Natural killer cell (primary cell): ENCODE measurements at regions of chr5 and their contacts with region 1.

Region 1: GRCh38 chr5:172133359-172134029 is 54.5 kb downstream of the STK10 start:
- DNase-seq: peak; percentile 53 to 61
- ATAC-seq: peak; percentile 79 to 91 (median 86)
- H3K4me3 ChIP-seq: no peak overlapping the region
- H3K4me3 Mint-ChIP-seq: peak overlapping the region; percentile 79
- H3K27ac ChIP-seq: peak overlapping the region; percentile 58
- H3K27ac Mint-ChIP-seq: peak overlapping the region; percentile 87 to 90
- H3K4me1 ChIP-seq: peaks cover 64% of the 10 kb centered on the region
- H3K4me1 Mint-ChIP-seq: peaks cover 80 to 81% of the 10 kb centered on the region in 2 donors
- H3K27me3 ChIP-seq: no peaks in the 10 kb centered on the region
- H3K27me3 Mint-ChIP-seq: no peaks in the 10 kb centered on the region
- CTCF ChIP-seq: no peak

Region 2: DNA sequence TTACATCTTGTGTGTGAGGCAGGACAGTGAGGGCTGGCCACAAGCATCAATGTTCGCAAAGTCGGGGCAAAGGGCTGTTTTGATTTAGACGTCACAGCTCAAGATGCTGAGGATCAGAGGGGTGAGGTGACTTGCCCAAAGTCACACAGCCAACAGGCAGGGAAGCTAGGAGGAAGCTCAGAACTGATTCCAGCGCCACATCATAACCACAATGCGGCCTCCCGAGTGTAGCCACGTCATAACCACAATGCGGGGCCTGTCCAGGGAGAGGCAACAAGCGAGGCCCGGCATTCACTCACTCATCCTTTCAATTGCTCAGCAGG is 40.3 kb after region 1 on chr5:
- intact Hi-C with region 1: loop called (anchors 5 kb)
- DNase-seq: peak; percentile 70 to 81
- ATAC-seq: peak; percentile 30 to 49 (median 43)
- H3K4me3 ChIP-seq: peak overlapping the region; percentile 57
- H3K4me3 Mint-ChIP-seq: peak overlapping the region; percentile 90
- H3K27ac ChIP-seq: peak overlapping the region; percentile 85
- H3K27ac Mint-ChIP-seq: peak overlapping the region; percentile 97 to 98
- H3K4me1 ChIP-seq: peaks cover 97% of the 10 kb centered on the region
- H3K4me1 Mint-ChIP-seq: peaks cover 96 to 99% of the 10 kb centered on the region in 2 donors
- H3K27me3 ChIP-seq: no peaks in the 10 kb centered on the region
- H3K27me3 Mint-ChIP-seq: no peaks in the 10 kb centered on the region
- CTCF ChIP-seq: no peak